ENCODE measurements at regions of chr3 and their contacts with region 1.

Region 1: GRCh38 chr3:57068437-57069089 is 8.1 kb downstream of the SPATA12 start:
- DNase-seq: peak; percentile 92
- ATAC-seq: peak; percentile 99
- H3K4me3 ChIP-seq: peak overlapping the region in 1 of 5 experiments; percentile 34
- H3K4me3 Mint-ChIP-seq: peak overlapping the region; percentile 74
- H3K27ac ChIP-seq: peak overlapping the region in 1 of 2 donors; percentile 21
- H3K27ac Mint-ChIP-seq: peak overlapping the region; percentile 80
- H3K4me1 ChIP-seq: peaks cover 18 to 22% of the 10 kb centered on the region in 2 donors
- H3K4me1 Mint-ChIP-seq: peaks cover 21% of the 10 kb centered on the region
- H3K27me3 ChIP-seq: peaks cover 0 to 46% (median 21%) of the 10 kb centered on the region in 4 experiments
- H3K27me3 Mint-ChIP-seq: peaks cover 42% of the 10 kb centered on the region
- CTCF ChIP-seq: no peak

Region 2: GRCh38 chr3:56682462-56683121 is 386.0 kb before region 1 on chr3:
- CTCF ChIA-PET with region 1: no interaction called
- POLR2A ChIA-PET with region 1: no interaction called
- intact Hi-C with region 1: loop called (anchors 10 kb)
- DNase-seq: peak; percentile 91
- ATAC-seq: peak; percentile 69
- H3K4me3 ChIP-seq: peak overlapping the region; percentile 74 to 99 (median 85)
- H3K4me3 Mint-ChIP-seq: peak overlapping the region; percentile 99
- H3K27ac ChIP-seq: peak overlapping the region; percentile 98 to 99
- H3K27ac Mint-ChIP-seq: peak overlapping the region; percentile 99
- H3K4me1 ChIP-seq: peaks cover 16 to 24% of the 10 kb centered on the region in 2 donors
- H3K4me1 Mint-ChIP-seq: peaks cover 42% of the 10 kb centered on the region
- H3K27me3 ChIP-seq: no peaks in the 10 kb centered on the region
- H3K27me3 Mint-ChIP-seq: no peaks in the 10 kb centered on the region
- CTCF ChIP-seq: no peak

Region 3: DNA sequence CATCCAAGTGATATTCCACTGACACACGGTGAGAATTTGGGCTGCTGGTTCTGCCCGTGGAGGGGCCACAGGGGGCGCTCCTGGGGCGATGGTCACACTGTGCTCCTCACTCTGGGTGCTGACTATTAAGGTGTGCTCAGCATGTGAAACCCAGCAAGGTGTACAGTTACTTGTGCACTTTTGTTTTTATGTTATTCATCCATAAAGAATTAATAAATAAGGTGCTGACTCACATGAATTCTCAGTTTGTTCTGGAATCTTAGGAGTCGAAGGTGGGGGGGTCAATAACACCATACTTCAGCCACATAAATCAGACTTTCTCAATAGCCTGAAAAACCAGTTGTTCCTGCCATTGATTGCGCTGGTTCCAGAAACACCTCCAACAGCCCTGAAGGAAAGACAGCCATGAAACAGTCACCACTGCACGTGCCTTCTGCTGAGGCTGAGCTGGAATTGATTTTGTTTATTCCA is 61.6 kb before region 1 on chr3:
- CTCF ChIA-PET with region 1: no interaction called
- POLR2A ChIA-PET with region 1: no interaction called
- intact Hi-C with region 1: no loop called
- DNase-seq: no peak
- ATAC-seq: no peak
- H3K4me3 ChIP-seq: no peak overlapping the region
- H3K4me3 Mint-ChIP-seq: no peak overlapping the region
- H3K27ac ChIP-seq: no peak overlapping the region
- H3K27ac Mint-ChIP-seq: no peak overlapping the region
- H3K4me1 ChIP-seq: no peaks in the 10 kb centered on the region
- H3K4me1 Mint-ChIP-seq: no peaks in the 10 kb centered on the region
- H3K27me3 ChIP-seq: peaks cover 0 to 7% (median 2%) of the 10 kb centered on the region in 4 experiments
- H3K27me3 Mint-ChIP-seq: peaks cover 32% of the 10 kb centered on the region
- CTCF ChIP-seq: no peak

Region 4: DNA sequence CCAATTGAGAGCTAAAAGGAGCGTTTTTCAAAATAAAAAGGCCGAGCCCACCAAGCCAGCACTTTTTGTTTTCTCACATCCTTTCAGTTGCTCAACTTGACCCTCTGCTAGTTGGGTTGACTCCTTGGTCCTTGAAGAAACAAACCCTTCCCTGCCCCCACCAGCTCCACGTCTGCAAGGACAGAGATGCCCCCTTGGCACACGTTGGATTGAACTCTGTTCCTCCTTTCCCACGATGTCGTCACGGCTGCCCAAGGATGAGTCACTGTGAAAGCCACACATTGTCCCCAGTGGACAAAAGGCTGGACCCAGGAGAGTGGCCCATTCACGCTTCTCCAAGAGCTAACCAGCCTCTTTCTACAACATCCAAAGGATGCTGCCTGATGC is 51.1 kb before region 1 on chr3:
- CTCF ChIA-PET with region 1: no interaction called
- POLR2A ChIA-PET with region 1: no interaction called
- intact Hi-C with region 1: loop called (anchors 1 kb)
- DNase-seq: no peak
- ATAC-seq: no peak
- H3K4me3 ChIP-seq: no peak overlapping the region
- H3K4me3 Mint-ChIP-seq: no peak overlapping the region
- H3K27ac ChIP-seq: no peak overlapping the region
- H3K27ac Mint-ChIP-seq: no peak overlapping the region
- H3K4me1 ChIP-seq: peaks cover 10 to 27% of the 10 kb centered on the region in 2 donors
- H3K4me1 Mint-ChIP-seq: peaks cover 22% of the 10 kb centered on the region
- H3K27me3 ChIP-seq: no peaks in the 10 kb centered on the region
- H3K27me3 Mint-ChIP-seq: peaks cover 6% of the 10 kb centered on the region
- CTCF ChIP-seq: no peak

Region 5: DNA sequence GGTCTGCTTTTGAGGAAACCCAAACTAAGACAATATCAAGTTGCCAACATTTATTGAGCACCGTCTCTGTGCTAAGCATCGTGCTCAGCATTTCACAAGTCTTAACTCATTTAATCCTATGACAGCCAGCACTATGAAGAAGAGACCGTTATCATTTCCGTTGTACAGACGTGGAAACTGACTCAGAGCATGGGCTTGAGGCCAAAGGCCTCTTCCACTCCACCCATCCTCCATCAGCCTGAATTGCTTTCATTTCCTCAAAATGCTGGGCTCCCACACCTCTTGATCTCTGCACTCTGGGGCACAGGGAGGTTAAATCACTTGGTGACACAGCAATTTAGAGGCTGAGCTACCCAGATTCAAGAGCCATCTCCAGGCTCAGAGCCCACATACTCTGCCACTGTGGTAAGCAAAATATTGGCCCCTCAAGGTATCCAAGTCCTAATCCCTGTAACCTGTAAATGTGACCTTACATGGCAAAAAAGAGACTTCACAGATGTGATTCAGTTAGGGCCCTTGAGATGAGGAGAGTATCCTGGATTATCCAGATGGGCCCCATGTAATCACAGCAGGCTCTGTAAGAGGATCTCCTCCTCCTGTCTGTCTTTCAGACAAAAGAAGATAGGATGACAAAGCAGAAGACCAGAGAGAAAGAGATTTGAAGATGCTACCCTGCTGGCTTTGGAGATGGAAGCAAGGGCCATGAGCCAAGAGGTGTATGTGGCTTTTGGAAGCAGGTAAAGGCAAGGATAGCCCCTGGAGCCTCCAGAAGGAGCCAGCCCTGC is 915.4 kb after region 1 on chr3:
- CTCF ChIA-PET with region 1: no interaction called
- POLR2A ChIA-PET with region 1: no interaction called
- intact Hi-C with region 1: loop called (anchors 5 kb)
- DNase-seq: peak; percentile 77
- ATAC-seq: peak; percentile 98
- H3K4me3 ChIP-seq: no peak overlapping the region
- H3K4me3 Mint-ChIP-seq: no peak overlapping the region
- H3K27ac ChIP-seq: peak overlapping the region in 1 of 2 donors; percentile 3
- H3K27ac Mint-ChIP-seq: peak overlapping the region; percentile 37
- H3K4me1 ChIP-seq: peaks cover 27 to 31% of the 10 kb centered on the region in 2 donors
- H3K4me1 Mint-ChIP-seq: peaks cover 30% of the 10 kb centered on the region
- H3K27me3 ChIP-seq: peaks cover 0 to 8% (median 3%) of the 10 kb centered on the region in 4 experiments
- H3K27me3 Mint-ChIP-seq: peaks cover 3% of the 10 kb centered on the region
- CTCF ChIP-seq: no peak

Measured in B cell (primary cell).